Transverse colon (tissue), 4 donors: ENCODE measurements at regions of chr1 and their contacts with region 1.

Region 1: GRCh38 chr1:99315305-99315704 is 51.0 kb downstream of the PLPPR4 start:
- DNase-seq: no peak
- H3K4me3 ChIP-seq: no peak overlapping the region
- H3K27ac ChIP-seq: no peak overlapping the region
- H3K4me1 ChIP-seq: no peaks in the 10 kb centered on the region
- H3K27me3 ChIP-seq: no peaks in the 10 kb centered on the region
- CTCF ChIP-seq: no peak
- EP300 ChIP-seq: no peak
- POLR2A ChIP-seq: no peak

Region 2: GRCh38 chr1:98478121-98478520 is 837.2 kb before region 1 on chr1:
- in situ Hi-C with region 1: no loop called
- intact Hi-C with region 1: no loop called
- DNase-seq: no peak
- H3K4me3 ChIP-seq: no peak overlapping the region
- H3K27ac ChIP-seq: no peak overlapping the region
- H3K4me1 ChIP-seq: no peaks in the 10 kb centered on the region
- H3K27me3 ChIP-seq: no peaks in the 10 kb centered on the region
- CTCF ChIP-seq: no peak
- EP300 ChIP-seq: no peak
- POLR2A ChIP-seq: no peak

Region 3: GRCh38 chr1:99331636-99332035 is 16.3 kb after region 1 on chr1:
- in situ Hi-C with region 1: no loop called
- intact Hi-C with region 1: loop called (anchors 1 kb)
- DNase-seq: no peak
- H3K4me3 ChIP-seq: no peak overlapping the region
- H3K27ac ChIP-seq: no peak overlapping the region
- H3K4me1 ChIP-seq: no peaks in the 10 kb centered on the region
- H3K27me3 ChIP-seq: no peaks in the 10 kb centered on the region
- CTCF ChIP-seq: no peak
- EP300 ChIP-seq: no peak
- POLR2A ChIP-seq: no peak